ENCODE measurements at regions of chr20 and their contacts with region 1.

Region 1: DNA sequence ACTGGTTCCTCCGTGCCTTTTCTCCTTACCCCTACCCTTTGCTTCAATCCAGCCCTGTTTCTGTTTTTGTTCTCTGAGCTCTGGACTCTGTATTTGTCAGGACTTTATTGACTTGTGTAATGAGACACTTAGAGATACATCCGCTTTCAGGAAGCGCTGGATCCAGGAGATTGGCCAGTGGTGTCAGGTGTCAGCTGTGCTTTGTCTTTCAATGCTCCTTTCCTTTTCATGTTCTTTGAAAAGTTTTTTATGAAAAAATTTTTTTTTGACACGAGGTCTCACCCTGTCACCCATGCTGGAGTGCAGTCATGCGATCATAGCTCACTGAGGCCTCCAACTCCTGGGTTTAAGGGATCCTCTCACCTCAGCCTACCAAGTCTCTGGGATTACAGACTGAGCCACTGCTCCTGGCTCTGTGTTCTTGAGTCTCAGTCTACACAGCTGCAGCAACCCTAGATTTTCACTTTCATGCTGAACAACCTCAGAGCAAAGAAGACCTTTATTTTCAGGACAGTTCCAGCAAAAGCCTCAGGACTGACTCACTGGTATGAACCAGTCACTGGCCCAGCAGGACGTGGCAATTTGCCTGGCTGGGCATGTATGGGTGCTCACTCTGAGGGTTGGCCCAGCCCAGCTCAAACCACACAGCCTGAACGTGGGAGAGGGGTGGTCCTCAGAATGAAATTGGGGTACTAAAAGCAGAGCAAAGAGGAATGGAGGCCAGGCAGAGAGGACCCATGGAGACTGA is 108.5 kb downstream of the DHX35 start:
- DNase-seq: no peak
- ATAC-seq: no peak
- H3K4me3 ChIP-seq: no peak overlapping the region
- H3K4me3 Mint-ChIP-seq: no peak overlapping the region
- H3K27ac ChIP-seq: no peak overlapping the region
- H3K27ac Mint-ChIP-seq: no peak overlapping the region
- H3K4me1 ChIP-seq: no peaks in the 10 kb centered on the region
- H3K4me1 Mint-ChIP-seq: no peaks in the 10 kb centered on the region
- H3K27me3 ChIP-seq: no peaks in the 10 kb centered on the region
- H3K27me3 Mint-ChIP-seq: peaks cover 13 to 45% (median 22%) of the 10 kb centered on the region in 5 donors

Region 2: GRCh38 chr20:38196592-38196991 is 874.1 kb before region 1 on chr20:
- CTCF ChIA-PET with region 1: no interaction called
- POLR2A ChIA-PET with region 1: no interaction called
- intact Hi-C with region 1: loop called in 1 of 2 experiments (anchors 10 kb)
- DNase-seq: no peak
- ATAC-seq: peak; percentile 83
- H3K4me3 ChIP-seq: no peak overlapping the region
- H3K4me3 Mint-ChIP-seq: no peak overlapping the region
- H3K27ac ChIP-seq: no peak overlapping the region
- H3K27ac Mint-ChIP-seq: no peak overlapping the region
- H3K4me1 ChIP-seq: no peaks in the 10 kb centered on the region
- H3K4me1 Mint-ChIP-seq: no peaks in the 10 kb centered on the region
- H3K27me3 ChIP-seq: no peaks in the 10 kb centered on the region
- H3K27me3 Mint-ChIP-seq: peaks cover under 1 to 22% (median 9%) of the 10 kb centered on the region in 5 donors

Region 3: GRCh38 chr20:39453890-39454289 is 383.2 kb after region 1 on chr20:
- CTCF ChIA-PET with region 1: no interaction called
- POLR2A ChIA-PET with region 1: no interaction called
- intact Hi-C with region 1: no loop called
- DNase-seq: no peak
- ATAC-seq: no peak
- H3K4me3 ChIP-seq: no peak overlapping the region
- H3K4me3 Mint-ChIP-seq: no peak overlapping the region
- H3K27ac ChIP-seq: no peak overlapping the region
- H3K27ac Mint-ChIP-seq: no peak overlapping the region
- H3K4me1 ChIP-seq: no peaks in the 10 kb centered on the region
- H3K4me1 Mint-ChIP-seq: peaks cover 0 to 2% (median 0%) of the 10 kb centered on the region in 7 donors
- H3K27me3 ChIP-seq: no peaks in the 10 kb centered on the region
- H3K27me3 Mint-ChIP-seq: peaks cover 0 to 28% (median 11%) of the 10 kb centered on the region in 5 donors